ENCODE measurements at regions of chr10 and their contacts with region 1.

Region 1: GRCh38 chr10:27319752-27320561 is 79.4 kb upstream of the ACBD5 start:
- DNase-seq: peak; percentile 86 to 97 (median 91)
- H3K4me3 ChIP-seq: peak overlapping the region; percentile 31 to 70 (median 50)
- H3K4me3 Mint-ChIP-seq: peak overlapping the region; percentile 72 to 84
- H3K27ac ChIP-seq: peak overlapping the region; percentile 71 to 83
- H3K27ac Mint-ChIP-seq: peak overlapping the region; percentile 83 to 96 (median 89)
- H3K4me1 ChIP-seq: peaks cover 14 to 25% of the 10 kb centered on the region in 2 donors
- H3K4me1 Mint-ChIP-seq: peaks cover 15% of the 10 kb centered on the region
- H3K27me3 ChIP-seq: no peaks in the 10 kb centered on the region
- H3K27me3 Mint-ChIP-seq: no peaks in the 10 kb centered on the region
- CTCF ChIP-seq: no peak

Region 2: GRCh38 chr10:26574783-26575182 is 745.2 kb before region 1 on chr10:
- intact Hi-C with region 1: loop called in 1 of 2 experiments (anchors 5 kb)
- DNase-seq: peak; percentile 71 to 78 (median 78)
- H3K4me3 ChIP-seq: peak overlapping the region in 1 of 3 experiments; percentile 34
- H3K4me3 Mint-ChIP-seq: peak overlapping the region in 1 of 2 donors; percentile 66
- H3K27ac ChIP-seq: peak overlapping the region in 1 of 2 donors; percentile 76
- H3K27ac Mint-ChIP-seq: peak overlapping the region; percentile 73 to 92 (median 84)
- H3K4me1 ChIP-seq: peaks cover 22 to 26% of the 10 kb centered on the region in 2 donors
- H3K4me1 Mint-ChIP-seq: peaks cover 31% of the 10 kb centered on the region
- H3K27me3 ChIP-seq: no peaks in the 10 kb centered on the region
- H3K27me3 Mint-ChIP-seq: no peaks in the 10 kb centered on the region
- CTCF ChIP-seq: no peak

Region 3: GRCh38 chr10:26939290-26939961 is 380.5 kb before region 1 on chr10:
- intact Hi-C with region 1: no loop called
- DNase-seq: no peak
- H3K4me3 ChIP-seq: no peak overlapping the region
- H3K4me3 Mint-ChIP-seq: no peak overlapping the region
- H3K27ac ChIP-seq: no peak overlapping the region
- H3K27ac Mint-ChIP-seq: peak overlapping the region in 1 of 7 donors; percentile 35
- H3K4me1 ChIP-seq: no peaks in the 10 kb centered on the region
- H3K4me1 Mint-ChIP-seq: no peaks in the 10 kb centered on the region
- H3K27me3 ChIP-seq: no peaks in the 10 kb centered on the region
- H3K27me3 Mint-ChIP-seq: peaks cover 0 to 5% (median 5%) of the 10 kb centered on the region in 3 donors
- CTCF ChIP-seq: no peak

Region 4: DNA sequence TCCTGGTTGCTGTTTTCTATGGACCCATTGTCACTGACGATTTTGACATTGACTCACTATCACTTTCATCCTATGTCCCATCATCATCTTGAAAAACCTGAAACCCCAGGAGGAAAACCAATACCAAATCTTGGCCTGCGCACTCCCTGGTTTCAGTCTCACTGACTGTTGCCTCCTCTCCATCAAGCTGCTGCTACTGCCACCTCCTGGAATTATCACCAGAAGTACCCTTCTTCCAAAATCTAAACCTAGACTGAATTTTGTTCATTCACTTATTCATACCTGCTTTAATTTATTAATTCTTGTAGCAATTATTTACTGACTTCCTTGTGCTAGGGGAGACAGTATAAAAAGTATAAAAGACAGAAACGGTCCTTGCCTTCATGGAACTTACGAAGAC is 34.8 kb before region 1 on chr10:
- intact Hi-C with region 1: no loop called
- DNase-seq: peak in 1 of 3 donors; percentile 3
- H3K4me3 ChIP-seq: no peak overlapping the region
- H3K4me3 Mint-ChIP-seq: no peak overlapping the region
- H3K27ac ChIP-seq: no peak overlapping the region
- H3K27ac Mint-ChIP-seq: no peak overlapping the region
- H3K4me1 ChIP-seq: no peaks in the 10 kb centered on the region
- H3K4me1 Mint-ChIP-seq: no peaks in the 10 kb centered on the region
- H3K27me3 ChIP-seq: no peaks in the 10 kb centered on the region
- H3K27me3 Mint-ChIP-seq: peaks cover 0 to 2% (median 0%) of the 10 kb centered on the region in 3 donors
- CTCF ChIP-seq: no peak

Measured in CD14-positive monocyte (primary cell).